Endothelial cell of umbilical vein (primary cell): ENCODE measurements at regions of chr1 and their contacts with region 1.

Region 1: GRCh38 chr1:221435504-221435904 is 306.4 kb downstream of the DUSP10 start:
- DNase-seq: peak; percentile 75
- H3K4me3 ChIP-seq: no peak overlapping the region
- H3K27ac ChIP-seq: peak overlapping the region; percentile 16
- H3K4me1 ChIP-seq: peaks cover 26% of the 10 kb centered on the region
- H3K27me3 ChIP-seq: no peaks in the 10 kb centered on the region
- CTCF ChIP-seq: peak; percentile 73 to 81
- POLR2A ChIP-seq: no peak

Region 2: DNA sequence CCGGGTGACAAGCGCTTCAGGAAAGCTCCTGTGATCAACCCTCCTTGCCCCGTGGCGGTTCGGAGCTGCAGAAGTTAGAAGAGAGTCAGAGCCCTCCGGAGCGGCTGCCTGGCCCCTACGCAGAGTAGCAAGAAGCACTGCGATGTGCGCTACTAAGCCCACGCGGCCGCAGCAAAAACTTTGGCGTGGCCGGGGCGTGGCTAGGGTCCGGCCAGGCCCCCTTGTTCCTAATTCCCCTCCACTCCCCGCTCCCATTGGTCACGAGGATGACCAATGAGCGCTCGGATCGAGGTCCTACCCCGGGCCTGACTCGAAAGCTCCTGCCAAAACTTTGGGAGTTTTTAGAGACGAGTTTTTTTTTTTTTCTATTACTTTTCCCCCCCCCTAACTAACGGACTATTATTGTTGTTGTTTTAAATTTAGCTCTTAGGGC is 556.4 kb before region 1 on chr1 and contains the start of gene HLX:
- CTCF ChIA-PET with region 1: interaction called, 62 read pairs
- POLR2A ChIA-PET with region 1: interaction called, 4 read pairs
- dilution Hi-C with region 1: no loop called
- intact Hi-C with region 1: loop called (anchors 1 kb)
- DNase-seq: peak; percentile 89
- H3K4me3 ChIP-seq: peak within 1 kb of the TSS; percentile 80 to 87 (median 82)
- H3K27ac ChIP-seq: peak within 1 kb of the TSS; percentile 35
- H3K4me1 ChIP-seq: peaks cover 41% of the 10 kb centered on the region
- H3K27me3 ChIP-seq: peaks cover 6 to 15% of the 10 kb centered on the region in 2 experiments
- CTCF ChIP-seq: no peak
- POLR2A ChIP-seq: no peak
- total RNA-seq, gene HLX: 33.5 and 39.1 TPM in 2 replicates

Region 3: DNA sequence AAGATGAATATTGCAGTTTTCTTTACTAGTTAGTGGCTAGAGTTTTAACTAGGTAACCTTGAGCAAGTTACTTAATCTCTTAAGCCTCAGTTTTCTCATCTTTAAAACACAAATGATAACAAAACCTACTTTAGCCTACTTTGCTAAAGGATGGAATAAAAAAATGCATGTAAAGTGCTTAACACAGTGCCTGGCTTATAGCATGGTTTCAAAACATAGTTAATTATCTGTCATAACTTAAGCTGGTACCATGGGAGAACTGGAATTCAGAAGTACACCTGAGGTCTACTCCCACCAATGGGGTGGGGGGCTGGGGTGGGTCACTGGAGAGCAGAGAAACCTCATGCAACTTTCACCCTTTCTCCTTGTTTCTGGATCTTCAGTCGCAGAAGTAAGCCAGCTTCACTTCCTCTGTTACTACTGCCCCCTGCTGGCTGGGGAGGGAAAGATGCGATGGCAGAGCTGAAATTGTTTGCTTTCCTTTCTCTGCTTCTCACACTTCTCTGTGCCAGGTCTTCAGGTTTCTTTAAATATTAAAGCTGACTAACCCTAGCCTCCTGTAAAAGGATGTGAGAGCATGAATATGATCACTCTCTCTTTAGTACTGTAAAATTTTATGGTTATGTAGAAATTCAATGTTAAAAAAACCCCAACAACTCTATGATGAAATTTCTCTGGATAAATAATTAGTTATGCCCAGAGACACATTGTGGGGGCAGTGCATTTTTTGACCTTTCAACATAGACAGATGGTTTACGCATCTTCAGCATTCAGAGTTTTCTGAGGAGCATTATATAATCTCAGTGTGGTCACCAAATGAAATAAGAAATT is 232.1 kb before region 1 on chr1:
- CTCF ChIA-PET with region 1: interaction called, 20 read pairs
- POLR2A ChIA-PET with region 1: no interaction called
- dilution Hi-C with region 1: no loop called
- intact Hi-C with region 1: loop called (anchors 1 kb)
- DNase-seq: peak; percentile 82
- H3K4me3 ChIP-seq: no peak overlapping the region
- H3K27ac ChIP-seq: no peak overlapping the region
- H3K4me1 ChIP-seq: no peaks in the 10 kb centered on the region
- H3K27me3 ChIP-seq: peaks cover 0 to 1% of the 10 kb centered on the region in 2 experiments
- CTCF ChIP-seq: peak; percentile 74 to 86
- POLR2A ChIP-seq: no peak

Region 4: GRCh38 chr1:221356693-221357092 is 78.8 kb before region 1 on chr1:
- CTCF ChIA-PET with region 1: interaction called, 5 read pairs
- POLR2A ChIA-PET with region 1: no interaction called
- dilution Hi-C with region 1: no loop called
- intact Hi-C with region 1: loop called (anchors 2 kb)
- DNase-seq: no peak
- H3K4me3 ChIP-seq: no peak overlapping the region
- H3K27ac ChIP-seq: no peak overlapping the region
- H3K4me1 ChIP-seq: no peaks in the 10 kb centered on the region
- H3K27me3 ChIP-seq: peaks cover 0 to 2% of the 10 kb centered on the region in 2 experiments
- CTCF ChIP-seq: no peak
- POLR2A ChIP-seq: no peak

Region 5: DNA sequence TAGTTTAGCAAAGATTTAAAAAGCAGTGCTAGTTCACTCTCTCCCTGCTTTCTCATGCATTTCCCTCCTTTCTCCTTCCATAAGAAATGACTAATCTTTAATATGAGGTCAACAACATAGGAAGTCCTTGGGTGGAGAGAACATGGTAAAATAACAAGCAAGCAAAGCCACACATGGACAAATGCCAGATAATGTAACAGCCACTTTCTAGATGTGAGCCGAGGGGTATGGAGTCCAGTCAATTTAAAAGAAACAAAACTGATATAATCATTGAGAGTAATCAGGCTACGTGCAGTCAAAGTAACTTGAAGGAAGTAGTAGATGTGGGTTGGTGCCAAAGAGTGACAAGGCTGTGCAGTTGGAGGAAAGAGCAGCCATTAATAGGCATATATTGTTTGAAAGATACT is 236.7 kb after region 1 on chr1:
- CTCF ChIA-PET with region 1: no interaction called
- POLR2A ChIA-PET with region 1: no interaction called
- dilution Hi-C with region 1: no loop called
- intact Hi-C with region 1: no loop called
- DNase-seq: peak; percentile 66
- H3K4me3 ChIP-seq: no peak overlapping the region
- H3K27ac ChIP-seq: no peak overlapping the region
- H3K4me1 ChIP-seq: peaks cover 13% of the 10 kb centered on the region
- H3K27me3 ChIP-seq: peaks cover 36 to 79% of the 10 kb centered on the region in 2 experiments
- CTCF ChIP-seq: no peak
- POLR2A ChIP-seq: no peak

Region 6: DNA sequence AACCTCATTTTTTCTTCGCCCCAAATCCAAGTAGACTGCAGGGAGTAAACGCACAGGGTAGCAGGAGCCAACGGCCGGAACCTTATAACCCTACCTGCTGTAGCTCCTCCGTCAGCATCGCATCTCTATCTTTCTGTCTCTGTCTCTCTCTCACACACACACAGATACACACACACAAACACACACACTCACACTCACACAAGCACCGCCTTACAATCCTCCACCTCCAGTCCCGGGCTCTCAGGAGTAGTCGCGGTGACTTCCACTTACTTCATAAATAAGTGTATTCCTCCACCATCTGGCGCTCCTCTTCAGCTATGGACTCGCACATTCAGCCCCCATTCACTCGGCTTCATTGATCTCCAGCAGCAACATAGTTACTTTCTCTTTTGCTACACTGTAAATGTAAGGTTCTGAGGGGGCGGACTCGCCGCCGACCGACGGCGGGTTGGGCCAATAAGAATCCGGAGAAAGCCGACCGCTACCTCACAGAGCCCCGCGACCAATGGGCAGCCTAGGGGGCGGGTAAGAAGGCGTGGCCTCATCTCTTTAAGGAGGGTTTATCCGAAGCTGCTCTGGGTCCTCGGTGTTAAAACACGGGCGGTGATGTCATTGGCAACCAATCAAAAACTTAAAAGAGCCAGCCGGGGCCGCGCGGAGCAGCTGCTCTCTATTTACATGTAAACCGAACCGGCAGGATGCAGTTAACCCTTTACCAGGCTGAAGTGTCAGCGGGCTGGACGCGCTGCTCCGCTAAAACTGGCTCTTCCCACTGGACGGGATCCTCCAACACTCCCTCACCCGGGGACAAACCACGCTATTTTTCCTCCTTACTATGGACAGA is 306.4 kb after region 1 on chr1 and contains the start of gene DUSP10:
- CTCF ChIA-PET with region 1: no interaction called
- POLR2A ChIA-PET with region 1: no interaction called
- dilution Hi-C with region 1: no loop called
- intact Hi-C with region 1: loop called (anchors 1 kb)
- DNase-seq: peak; percentile 100
- H3K4me3 ChIP-seq: peak within 1 kb of the TSS; percentile 39 to 84 (median 64)
- H3K27ac ChIP-seq: peak within 1 kb of the TSS; percentile 94
- H3K4me1 ChIP-seq: peaks cover 13% of the 10 kb centered on the region
- H3K27me3 ChIP-seq: peaks cover 7 to 13% of the 10 kb centered on the region in 2 experiments
- CTCF ChIP-seq: no peak
- POLR2A ChIP-seq: no peak
- total RNA-seq, gene DUSP10: 1.6 and 1.9 TPM in 2 replicates